ENCODE measurements at regions of chr13 and their contacts with region 1.

Region 1: DNA sequence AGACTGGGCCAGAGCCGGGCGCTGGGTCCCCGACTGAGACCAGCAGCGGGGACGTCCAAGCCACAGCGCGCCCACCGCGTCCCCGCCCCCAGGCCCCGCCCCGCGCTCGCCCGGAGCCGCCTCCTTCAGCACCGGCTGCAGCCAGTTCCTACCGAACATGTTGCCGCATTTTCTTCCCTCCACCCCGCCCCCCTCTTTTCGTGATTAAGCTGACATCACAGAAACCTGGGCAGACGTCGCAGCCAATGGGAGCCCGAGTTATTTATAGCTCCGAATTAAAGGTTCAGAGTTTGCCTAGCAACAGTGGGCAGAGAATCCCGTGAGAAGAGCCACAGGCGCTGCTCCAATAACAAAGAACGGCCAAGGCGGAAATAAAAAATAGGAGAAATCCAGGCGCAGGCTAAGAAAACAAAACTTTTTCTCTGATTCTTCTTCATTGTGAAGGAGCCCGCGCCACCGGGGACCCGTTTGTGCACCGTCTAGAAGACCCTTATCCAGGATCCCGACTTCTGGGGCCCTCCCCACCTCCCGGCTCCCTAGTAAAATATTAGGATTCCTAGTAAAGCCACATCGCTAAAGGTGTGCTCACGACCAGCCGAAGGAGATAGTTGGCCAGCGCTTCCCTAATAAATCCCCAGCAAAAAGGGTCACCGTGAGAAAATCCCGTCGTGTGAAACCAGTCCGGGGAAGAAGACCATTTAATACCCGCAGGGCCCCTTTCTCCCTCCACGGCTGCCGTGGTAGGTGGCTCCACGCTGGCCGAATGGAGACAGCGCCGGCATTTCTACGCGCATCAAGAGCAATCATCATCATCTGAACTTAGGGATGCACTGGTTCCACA is 61.7 kb downstream of the SERP2 start:
- DNase-seq: peak; percentile 98
- ATAC-seq: peak; percentile 64
- H3K4me3 ChIP-seq: peak overlapping the region; percentile 77
- H3K27ac ChIP-seq: peak overlapping the region; percentile 74
- H3K4me1 ChIP-seq: peaks cover 8% of the 10 kb centered on the region; the same call in 1 of the 2 replicates
- H3K27me3 ChIP-seq: no peaks in the 10 kb centered on the region
- CTCF ChIP-seq: 0 out of 2 replicates have a peak, but pooled peaks have one; percentile 1
- POLR2A ChIP-seq: peak; percentile 89
- RAD21 ChIP-seq: no peak

Region 2: GRCh38 chr13:44022163-44022562 is 413.2 kb before region 1 on chr13:
- CTCF ChIA-PET with region 1: no interaction called
- POLR2A ChIA-PET with region 1: interaction called, 10 read pairs
- dilution Hi-C with region 1: no loop called
- in situ Hi-C with region 1: no loop called
- intact Hi-C with region 1: no loop called
- DNase-seq: no peak
- ATAC-seq: no peak
- H3K4me3 ChIP-seq: no peak overlapping the region
- H3K27ac ChIP-seq: no peak overlapping the region
- H3K4me1 ChIP-seq: peaks cover 2% of the 10 kb centered on the region; the same call in 1 of the 2 replicates
- H3K27me3 ChIP-seq: peaks cover 2% of the 10 kb centered on the region; the same call in 1 of the 2 replicates
- CTCF ChIP-seq: no peak
- POLR2A ChIP-seq: no peak
- RAD21 ChIP-seq: no peak

Region 3: DNA sequence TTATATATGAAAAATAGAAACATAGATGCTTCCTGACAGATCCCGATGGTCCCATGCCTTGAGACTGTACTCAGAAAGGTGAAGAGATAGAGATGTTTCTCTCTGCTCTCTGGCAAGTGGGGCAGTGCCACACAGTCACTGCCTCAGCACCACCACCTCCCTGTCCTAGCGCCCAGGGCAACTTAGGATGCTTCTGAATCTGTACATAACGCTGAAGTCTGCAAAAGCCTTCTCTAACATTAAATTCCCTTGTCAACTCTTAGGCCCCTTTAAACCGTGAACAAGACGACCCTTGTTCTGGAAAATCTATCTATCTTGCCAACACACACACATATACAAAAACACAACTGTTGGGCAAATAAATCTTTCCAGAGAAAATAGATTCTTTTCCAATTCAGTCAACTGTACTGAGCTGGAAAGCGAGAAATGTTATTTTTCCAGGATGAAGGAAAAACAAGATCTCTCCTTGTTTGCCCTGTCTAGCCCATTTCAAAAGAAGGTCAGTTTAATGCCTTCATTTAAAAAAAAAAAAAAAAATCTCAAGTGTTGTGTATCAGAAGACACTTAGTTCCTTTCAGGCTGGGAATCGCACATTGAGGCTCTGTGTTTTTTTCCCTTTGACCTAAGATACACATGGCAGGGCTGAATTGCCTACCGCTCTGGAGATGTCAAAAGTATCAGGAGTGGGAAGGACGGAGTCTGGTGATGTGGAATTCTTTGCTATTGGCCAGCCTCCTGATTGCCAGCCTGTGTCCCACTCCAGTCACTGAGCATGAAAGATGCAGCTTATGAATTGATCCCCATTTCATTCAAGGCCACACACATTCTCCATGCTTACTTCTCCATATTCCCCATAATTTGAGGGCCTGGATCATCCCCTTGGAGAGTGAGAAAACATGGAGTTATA is 314.3 kb before region 1 on chr13:
- CTCF ChIA-PET with region 1: no interaction called
- POLR2A ChIA-PET with region 1: interaction called, 21 read pairs
- dilution Hi-C with region 1: no loop called
- in situ Hi-C with region 1: no loop called
- intact Hi-C with region 1: loop called (anchors 5 kb)
- DNase-seq: no peak
- ATAC-seq: no peak
- H3K4me3 ChIP-seq: no peak overlapping the region
- H3K27ac ChIP-seq: no peak overlapping the region
- H3K4me1 ChIP-seq: peaks cover 5% of the 10 kb centered on the region; the same call in 1 of the 2 replicates
- H3K27me3 ChIP-seq: no peaks in the 10 kb centered on the region
- CTCF ChIP-seq: no peak
- POLR2A ChIP-seq: no peak
- RAD21 ChIP-seq: no peak

Region 4: GRCh38 chr13:44141725-44142539 is 293.4 kb before region 1 on chr13:
- CTCF ChIA-PET with region 1: interaction called, 3 read pairs
- POLR2A ChIA-PET with region 1: no interaction called
- dilution Hi-C with region 1: no loop called
- in situ Hi-C with region 1: no loop called
- intact Hi-C with region 1: loop called (anchors 2 kb)
- DNase-seq: peak; percentile 90
- ATAC-seq: peak; percentile 100
- H3K4me3 ChIP-seq: peak overlapping the region; percentile 67
- H3K27ac ChIP-seq: peak overlapping the region; percentile 92
- H3K4me1 ChIP-seq: peaks cover 7% of the 10 kb centered on the region
- H3K27me3 ChIP-seq: peaks cover 2% of the 10 kb centered on the region; the same call in 1 of the 2 replicates
- CTCF ChIP-seq: 0 out of 2 replicates have a peak, but pooled peaks have one; percentile 3
- POLR2A ChIP-seq: peak; percentile 76
- RAD21 ChIP-seq: peak; percentile 15; the same call in 1 of the 2 replicates

Region 5: DNA sequence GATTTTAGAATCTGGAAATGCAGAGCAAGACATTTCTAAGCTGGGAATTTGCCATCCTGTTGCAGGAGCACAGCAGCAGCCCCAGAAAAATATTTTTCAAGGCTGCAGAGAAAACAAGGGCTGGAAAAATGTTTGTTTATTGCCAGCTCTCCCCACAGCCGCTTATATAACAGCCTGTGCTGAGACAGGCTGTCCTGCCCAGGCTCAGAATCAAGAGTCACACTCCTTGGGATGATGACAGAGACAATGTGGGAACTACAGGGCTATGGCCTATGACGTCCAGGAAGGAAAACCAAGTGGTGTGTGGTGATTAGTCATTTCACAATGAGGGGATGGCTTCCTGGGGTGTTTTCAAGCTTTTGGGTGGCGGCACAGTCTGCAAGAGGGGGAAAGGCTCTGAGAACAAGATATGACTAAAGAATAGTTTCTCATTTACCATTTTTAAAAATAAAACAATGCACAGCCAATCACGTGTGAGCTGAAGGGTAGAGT is 198.0 kb before region 1 on chr13:
- CTCF ChIA-PET with region 1: no interaction called
- POLR2A ChIA-PET with region 1: no interaction called
- dilution Hi-C with region 1: no loop called
- in situ Hi-C with region 1: loop called (anchors 10 kb)
- intact Hi-C with region 1: no loop called
- DNase-seq: peak; percentile 98
- ATAC-seq: peak; percentile 85
- H3K4me3 ChIP-seq: no peak overlapping the region
- H3K27ac ChIP-seq: peak overlapping the region; percentile 0; the same call in 1 of the 2 replicates
- H3K4me1 ChIP-seq: peaks cover 11% of the 10 kb centered on the region
- H3K27me3 ChIP-seq: no peaks in the 10 kb centered on the region
- CTCF ChIP-seq: no peak
- POLR2A ChIP-seq: 0 out of 2 replicates have a peak, but pooled peaks have one; percentile 22
- RAD21 ChIP-seq: peak; percentile 19; the same call in 1 of the 2 replicates

Region 6: DNA sequence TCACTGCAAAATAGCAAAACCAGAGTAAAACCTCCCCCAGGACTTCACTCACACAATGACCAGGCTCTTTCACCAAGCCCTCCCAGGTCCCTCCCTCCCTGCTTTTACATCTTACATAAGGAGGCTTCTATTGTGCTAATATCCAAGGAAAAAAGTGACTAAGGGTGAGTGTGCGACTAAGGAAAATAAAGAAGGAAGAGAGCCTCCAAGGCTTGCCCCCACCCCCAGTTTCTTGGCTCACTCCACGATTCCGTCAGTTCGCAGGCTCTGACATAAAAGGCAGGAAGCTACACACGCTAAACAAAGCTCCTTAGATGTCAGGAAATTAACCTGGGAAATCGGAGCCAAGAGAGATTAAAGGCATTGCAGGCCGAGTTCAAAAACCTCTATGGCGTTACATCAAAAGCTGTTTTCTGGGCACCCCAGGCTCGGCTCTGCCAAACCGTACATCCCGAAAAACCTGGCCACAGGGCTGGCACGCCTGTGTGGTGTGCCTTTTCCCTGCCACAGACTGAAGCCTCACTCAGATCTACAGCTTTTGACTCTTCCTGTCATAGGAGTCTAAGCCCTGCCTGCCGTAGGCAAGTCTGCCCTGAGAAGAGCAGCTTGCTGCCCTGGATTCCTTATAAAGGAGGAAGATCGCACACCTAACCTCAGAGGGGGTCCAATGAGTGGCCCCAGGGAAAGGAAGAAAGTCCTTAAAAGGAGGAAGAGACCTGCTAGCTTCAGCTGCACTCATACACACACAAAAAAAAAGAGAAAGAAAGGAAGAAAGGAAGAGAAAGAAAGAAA is 128.8 kb before region 1 on chr13:
- CTCF ChIA-PET with region 1: interaction called, 3 read pairs
- POLR2A ChIA-PET with region 1: no interaction called
- dilution Hi-C with region 1: no loop called
- in situ Hi-C with region 1: no loop called
- intact Hi-C with region 1: loop called (anchors 5 kb)
- DNase-seq: peak; percentile 99
- ATAC-seq: peak; percentile 86
- H3K4me3 ChIP-seq: no peak overlapping the region
- H3K27ac ChIP-seq: peak overlapping the region; percentile 65
- H3K4me1 ChIP-seq: peaks cover 23% of the 10 kb centered on the region
- H3K27me3 ChIP-seq: no peaks in the 10 kb centered on the region
- CTCF ChIP-seq: no peak
- POLR2A ChIP-seq: no peak
- RAD21 ChIP-seq: no peak; the same call in 1 of the 2 replicates

Region 7: GRCh38 chr13:44988973-44989817 is 553.8 kb after region 1 on chr13 and contains the starts of genes GPALPP1 and NUFIP1:
- CTCF ChIA-PET with region 1: no interaction called
- POLR2A ChIA-PET with region 1: no interaction called
- dilution Hi-C with region 1: no loop called
- in situ Hi-C with region 1: no loop called
- intact Hi-C with region 1: no loop called
- DNase-seq: peak; percentile 95
- ATAC-seq: peak; percentile 90
- H3K4me3 ChIP-seq: peak within 1 kb of the TSS; percentile 96
- H3K27ac ChIP-seq: peak within 1 kb of the TSS; percentile 93
- H3K4me1 ChIP-seq: peaks cover 2% of the 10 kb centered on the region
- H3K27me3 ChIP-seq: no peaks in the 10 kb centered on the region
- CTCF ChIP-seq: no peak
- POLR2A ChIP-seq: peak; percentile 86
- RAD21 ChIP-seq: no peak; the same call in 1 of the 2 replicates
- total RNA-seq, gene GPALPP1: 10.6 and 25.3 TPM in 2 replicates
- total RNA-seq, gene NUFIP1: 1.4 and 2.5 TPM in 2 replicates

Region 8: DNA sequence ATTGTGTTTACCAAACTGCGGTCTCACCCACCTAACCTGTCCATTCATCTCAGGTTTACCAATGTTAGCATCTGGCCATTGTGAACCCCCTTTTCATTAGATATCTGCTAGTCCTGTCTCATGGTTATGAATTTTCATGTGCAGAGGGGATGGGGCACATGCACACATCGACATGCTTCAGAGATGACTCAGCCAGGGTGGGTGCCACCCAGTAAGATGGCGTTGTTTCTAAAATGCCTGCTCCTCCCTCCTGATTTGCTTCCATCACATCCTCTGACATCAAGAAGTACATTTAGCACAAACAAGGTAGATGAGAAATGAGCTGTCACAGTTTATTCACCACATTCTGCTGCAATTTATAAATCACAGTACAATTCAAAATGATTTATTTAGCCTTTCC is 605.3 kb after region 1 on chr13:
- CTCF ChIA-PET with region 1: no interaction called
- POLR2A ChIA-PET with region 1: interaction called, 18 read pairs
- dilution Hi-C with region 1: no loop called
- in situ Hi-C with region 1: no loop called
- intact Hi-C with region 1: no loop called
- DNase-seq: no peak
- ATAC-seq: no peak
- H3K4me3 ChIP-seq: no peak overlapping the region
- H3K27ac ChIP-seq: no peak overlapping the region
- H3K4me1 ChIP-seq: peaks cover 17% of the 10 kb centered on the region
- H3K27me3 ChIP-seq: no peaks in the 10 kb centered on the region
- CTCF ChIP-seq: no peak
- POLR2A ChIP-seq: no peak
- RAD21 ChIP-seq: no peak

Measured in IMR-90 (cell line).